ENCODE measurements at regions of chr11 and their contacts with region 1.

Region 1: DNA sequence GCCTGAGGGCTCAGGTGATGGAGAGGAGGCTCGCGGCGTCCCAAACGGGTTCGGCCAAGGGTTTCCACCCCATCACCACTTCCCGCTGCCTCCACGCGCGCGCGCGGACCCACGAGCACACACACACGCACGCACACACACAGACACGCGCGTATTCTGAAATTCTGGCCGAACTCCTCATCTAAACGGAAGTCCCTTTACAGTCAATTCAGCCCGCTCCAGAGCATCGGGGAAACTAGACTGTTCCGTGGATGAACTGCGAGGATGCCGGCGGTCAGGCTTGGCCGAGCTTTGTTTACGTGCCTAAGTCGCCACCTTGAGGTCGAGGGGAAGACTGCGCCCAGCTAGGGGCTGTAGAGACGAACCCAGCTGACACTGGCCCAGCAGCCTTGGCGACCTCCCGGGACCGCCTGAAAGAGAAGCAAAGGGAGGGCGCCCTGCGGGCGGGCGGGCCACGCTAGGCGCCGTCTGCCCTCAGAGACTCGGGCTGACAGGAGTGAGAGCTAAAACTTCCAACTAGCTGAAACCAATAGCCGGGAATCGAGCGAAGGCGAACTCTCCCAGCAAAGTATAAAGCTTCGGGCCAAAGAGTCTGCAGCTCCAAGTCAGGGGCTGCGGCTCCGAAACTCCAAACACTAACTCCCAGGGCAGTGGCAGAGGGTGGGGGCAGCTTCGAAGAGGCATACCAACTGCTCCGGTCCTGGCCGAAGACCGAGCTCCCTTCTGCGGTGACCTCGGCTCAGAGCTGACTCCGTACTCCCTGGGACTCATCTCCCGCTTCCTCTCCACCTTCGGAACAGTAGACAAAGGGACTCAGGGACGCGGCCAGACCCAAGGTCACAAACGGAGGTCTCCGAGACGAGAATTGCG is 124.7 kb upstream of the C11orf58 start:
- DNase-seq: peak; percentile 89
- H3K4me3 ChIP-seq: peak overlapping the region; percentile 12 to 38 (median 34)
- H3K27ac ChIP-seq: peak overlapping the region in 1 of 4 donors; percentile 21
- H3K4me1 ChIP-seq: peaks cover 0 to 18% (median 17%) of the 10 kb centered on the region in 4 donors
- H3K27me3 ChIP-seq: peaks cover 52 to 100% (median 88%) of the 10 kb centered on the region in 3 donors
- CTCF ChIP-seq: peak; percentile 58 to 86 (median 73)
- EP300 ChIP-seq: no peak
- POLR2A ChIP-seq: no peak

Region 2: GRCh38 chr11:15101072-15101709 is 1512.6 kb before region 1 on chr11:
- intact Hi-C with region 1: loop called (anchors 5 kb)
- DNase-seq: peak; percentile 81
- H3K4me3 ChIP-seq: no peak overlapping the region
- H3K27ac ChIP-seq: no peak overlapping the region
- H3K4me1 ChIP-seq: no peaks in the 10 kb centered on the region
- H3K27me3 ChIP-seq: no peaks in the 10 kb centered on the region
- CTCF ChIP-seq: peak; percentile 47 to 95 (median 72)
- EP300 ChIP-seq: no peak
- POLR2A ChIP-seq: no peak

Region 3: GRCh38 chr11:15819679-15820286 is 794.0 kb before region 1 on chr11:
- intact Hi-C with region 1: loop called (anchors 2 kb)
- DNase-seq: peak; percentile 77
- H3K4me3 ChIP-seq: no peak overlapping the region
- H3K27ac ChIP-seq: no peak overlapping the region
- H3K4me1 ChIP-seq: peaks cover 0 to 30% (median 24%) of the 10 kb centered on the region in 4 donors
- H3K27me3 ChIP-seq: no peaks in the 10 kb centered on the region
- CTCF ChIP-seq: peak; percentile 44 to 81 (median 78)
- EP300 ChIP-seq: no peak
- POLR2A ChIP-seq: no peak

Region 4: DNA sequence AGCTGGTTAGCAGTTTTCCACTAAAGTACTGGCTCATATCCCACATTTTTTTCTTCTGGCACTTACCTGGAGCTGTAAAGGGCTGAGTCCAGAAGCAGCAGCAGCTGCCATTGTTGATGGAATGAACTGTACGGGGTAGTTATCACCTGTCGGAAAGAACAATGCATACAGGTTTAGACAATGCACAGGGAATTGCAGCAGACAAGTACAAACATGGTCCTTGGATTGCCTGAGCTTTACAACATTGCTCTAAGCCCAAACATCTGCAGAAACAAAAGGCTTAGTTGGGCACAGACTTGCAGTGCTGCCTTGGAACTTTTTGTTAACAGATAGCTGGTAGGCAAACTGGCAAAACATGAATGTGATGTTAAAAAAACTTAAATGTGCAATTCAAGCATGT is 516.2 kb before region 1 on chr11:
- intact Hi-C with region 1: no loop called
- DNase-seq: no peak
- H3K4me3 ChIP-seq: no peak overlapping the region
- H3K27ac ChIP-seq: no peak overlapping the region
- H3K4me1 ChIP-seq: peaks cover 0 to 5% (median 0%) of the 10 kb centered on the region in 4 donors
- H3K27me3 ChIP-seq: no peaks in the 10 kb centered on the region
- CTCF ChIP-seq: no peak
- EP300 ChIP-seq: no peak
- POLR2A ChIP-seq: no peak

Measured in sigmoid colon (tissue), 7 donors.